ENCODE measurements at regions of chr6 and their contacts with region 1.

Region 1: DNA sequence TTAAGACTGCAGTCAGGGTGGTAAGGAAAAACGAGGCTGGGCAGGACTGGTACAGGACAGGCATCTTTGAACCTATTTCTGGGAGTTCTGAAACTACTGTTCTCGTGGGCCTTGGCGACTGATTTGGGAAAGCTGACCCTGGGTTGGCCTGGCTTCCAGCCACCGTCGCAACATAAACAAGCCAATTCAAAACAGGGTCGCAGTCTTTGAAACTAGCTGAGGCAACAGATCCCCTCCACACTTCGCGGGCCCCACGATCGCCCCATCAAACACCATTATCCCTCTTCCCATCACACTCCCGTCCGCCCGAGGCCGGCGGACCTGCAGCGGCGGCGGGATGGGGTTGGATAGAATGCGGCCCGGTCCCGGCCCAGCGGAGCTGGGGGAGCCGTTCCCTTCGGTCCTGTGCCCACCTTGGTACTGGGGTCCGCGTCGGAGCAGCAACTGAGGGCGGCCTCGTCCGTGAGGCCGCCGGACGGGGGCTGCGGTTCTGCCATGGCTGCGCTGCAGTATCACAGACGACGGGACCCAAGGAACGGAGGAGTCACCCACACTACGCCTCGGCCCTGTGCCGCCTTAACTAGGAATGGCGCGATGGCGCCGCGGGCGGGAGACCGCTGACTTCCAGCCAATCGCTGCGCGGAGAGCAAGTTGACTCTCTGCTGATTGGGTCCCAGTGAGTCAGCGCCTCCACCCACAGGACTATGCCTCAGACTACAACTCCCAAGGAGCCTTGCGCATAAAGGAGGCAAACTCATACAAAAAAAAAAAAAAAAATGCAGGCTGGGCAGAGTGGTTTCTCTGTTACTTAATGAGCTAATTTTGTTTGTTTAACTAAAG is at the start of gene GLO1:
- DNase-seq: peak; percentile 97
- H3K4me3 ChIP-seq: peak within 1 kb of the TSS; percentile 70 to 82 (median 78)
- H3K27ac ChIP-seq: peak within 1 kb of the TSS; percentile 92 to 97 (median 94)
- H3K4me1 ChIP-seq: peaks cover 0 to 3% (median 1%) of the 10 kb centered on the region in 4 donors
- H3K27me3 ChIP-seq: no peaks in the 10 kb centered on the region
- CTCF ChIP-seq: no peak
- EP300 ChIP-seq: no peak
- POLR2A ChIP-seq: peak; percentile 94
- total RNA-seq, gene GLO1: 15.3 to 56.1 (median 36.6) TPM

Region 2: GRCh38 chr6:38212579-38212978 is 490.2 kb before region 1 on chr6:
- in situ Hi-C with region 1: no loop called
- intact Hi-C with region 1: no loop called
- DNase-seq: no peak
- H3K4me3 ChIP-seq: no peak overlapping the region
- H3K27ac ChIP-seq: peak overlapping the region; percentile 54 to 74 (median 60)
- H3K4me1 ChIP-seq: peaks cover 10 to 14% (median 14%) of the 10 kb centered on the region in 4 donors
- H3K27me3 ChIP-seq: no peaks in the 10 kb centered on the region
- CTCF ChIP-seq: no peak
- EP300 ChIP-seq: no peak
- POLR2A ChIP-seq: no peak

Region 3: GRCh38 chr6:38915205-38915925 is 212.6 kb after region 1 on chr6:
- in situ Hi-C with region 1: no loop called
- intact Hi-C with region 1: no loop called
- DNase-seq: no peak
- H3K4me3 ChIP-seq: no peak overlapping the region
- H3K27ac ChIP-seq: no peak overlapping the region
- H3K4me1 ChIP-seq: no peaks in the 10 kb centered on the region
- H3K27me3 ChIP-seq: no peaks in the 10 kb centered on the region
- CTCF ChIP-seq: no peak
- EP300 ChIP-seq: no peak
- POLR2A ChIP-seq: no peak

Region 4: GRCh38 chr6:39610221-39610620 is 907.4 kb after region 1 on chr6:
- in situ Hi-C with region 1: no loop called
- intact Hi-C with region 1: loop called (anchors 10 kb)
- DNase-seq: no peak
- H3K4me3 ChIP-seq: no peak overlapping the region
- H3K27ac ChIP-seq: peak overlapping the region in 3 of 4 donors; percentile 3 to 25 (median 20)
- H3K4me1 ChIP-seq: no peaks in the 10 kb centered on the region
- H3K27me3 ChIP-seq: no peaks in the 10 kb centered on the region
- CTCF ChIP-seq: no peak
- EP300 ChIP-seq: no peak
- POLR2A ChIP-seq: no peak

Measured in transverse colon (tissue), 4 donors.